Activated CD4-positive, alpha-beta T cell treated with anti-CD3 and anti-CD28 coated beads for 36 hours (primary cell): ENCODE measurements at regions of chr20 and their contacts with region 1.

Region 1: GRCh38 chr20:54115151-54115854 is 44.9 kb upstream of the BCAS1 start:
- DNase-seq: no peak
- ATAC-seq: no peak
- H3K4me3 Mint-ChIP-seq: no peak overlapping the region
- H3K27ac Mint-ChIP-seq: no peak overlapping the region
- H3K4me1 Mint-ChIP-seq: no peaks in the 10 kb centered on the region
- H3K27me3 Mint-ChIP-seq: peaks cover 6% of the 10 kb centered on the region

Region 2: GRCh38 chr20:53917145-53918019 is 197.9 kb before region 1 on chr20:
- CTCF ChIA-PET with region 1: no interaction called
- POLR2A ChIA-PET with region 1: no interaction called
- intact Hi-C with region 1: no loop called
- DNase-seq: no peak
- ATAC-seq: no peak
- H3K4me3 Mint-ChIP-seq: no peak overlapping the region
- H3K27ac Mint-ChIP-seq: peak overlapping the region; percentile 8
- H3K4me1 Mint-ChIP-seq: peaks cover 41% of the 10 kb centered on the region
- H3K27me3 Mint-ChIP-seq: no peaks in the 10 kb centered on the region

Region 3: GRCh38 chr20:54103067-54103761 is 12.1 kb before region 1 on chr20:
- CTCF ChIA-PET with region 1: interaction called, 13 read pairs
- POLR2A ChIA-PET with region 1: no interaction called
- intact Hi-C with region 1: no loop called
- DNase-seq: peak; percentile 89
- ATAC-seq: peak; percentile 77
- H3K4me3 Mint-ChIP-seq: no peak overlapping the region
- H3K27ac Mint-ChIP-seq: no peak overlapping the region
- H3K4me1 Mint-ChIP-seq: peaks cover 5% of the 10 kb centered on the region
- H3K27me3 Mint-ChIP-seq: peaks cover 10% of the 10 kb centered on the region

Region 4: DNA sequence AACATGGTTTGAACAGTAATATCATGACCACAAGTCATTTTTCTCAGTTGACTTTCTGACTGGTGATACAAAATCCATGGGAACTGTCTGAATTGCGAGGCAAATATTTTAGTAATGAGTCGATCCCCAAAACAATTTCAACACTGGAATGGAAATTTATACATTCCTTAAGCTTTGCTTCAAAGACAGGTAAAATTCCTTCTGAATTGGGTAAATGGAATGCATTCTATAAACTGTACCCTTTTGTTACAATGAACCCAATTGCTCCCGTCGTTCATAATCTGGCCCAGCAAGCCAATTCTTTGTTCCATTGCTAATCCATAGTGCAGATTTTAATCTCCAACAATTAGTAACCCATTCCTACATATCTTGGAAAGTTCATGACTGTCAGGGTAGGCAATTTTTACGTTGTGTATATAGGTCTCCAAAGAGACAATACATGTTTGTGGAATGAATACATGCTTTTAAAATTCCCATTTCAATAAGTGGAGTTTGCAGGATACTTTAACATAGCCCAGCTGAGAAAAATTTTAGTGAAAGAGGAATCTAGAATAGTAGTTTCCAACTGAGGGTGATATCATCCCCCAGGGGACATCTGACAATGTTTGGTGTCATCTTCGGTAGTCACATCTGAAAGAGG is 25.7 kb after region 1 on chr20:
- CTCF ChIA-PET with region 1: no interaction called
- POLR2A ChIA-PET with region 1: no interaction called
- intact Hi-C with region 1: no loop called
- DNase-seq: no peak
- ATAC-seq: no peak
- H3K4me3 Mint-ChIP-seq: no peak overlapping the region
- H3K27ac Mint-ChIP-seq: no peak overlapping the region
- H3K4me1 Mint-ChIP-seq: no peaks in the 10 kb centered on the region
- H3K27me3 Mint-ChIP-seq: peaks cover 3% of the 10 kb centered on the region